ENCODE measurements at regions of chr3 and their contacts with region 1.

Region 1: DNA sequence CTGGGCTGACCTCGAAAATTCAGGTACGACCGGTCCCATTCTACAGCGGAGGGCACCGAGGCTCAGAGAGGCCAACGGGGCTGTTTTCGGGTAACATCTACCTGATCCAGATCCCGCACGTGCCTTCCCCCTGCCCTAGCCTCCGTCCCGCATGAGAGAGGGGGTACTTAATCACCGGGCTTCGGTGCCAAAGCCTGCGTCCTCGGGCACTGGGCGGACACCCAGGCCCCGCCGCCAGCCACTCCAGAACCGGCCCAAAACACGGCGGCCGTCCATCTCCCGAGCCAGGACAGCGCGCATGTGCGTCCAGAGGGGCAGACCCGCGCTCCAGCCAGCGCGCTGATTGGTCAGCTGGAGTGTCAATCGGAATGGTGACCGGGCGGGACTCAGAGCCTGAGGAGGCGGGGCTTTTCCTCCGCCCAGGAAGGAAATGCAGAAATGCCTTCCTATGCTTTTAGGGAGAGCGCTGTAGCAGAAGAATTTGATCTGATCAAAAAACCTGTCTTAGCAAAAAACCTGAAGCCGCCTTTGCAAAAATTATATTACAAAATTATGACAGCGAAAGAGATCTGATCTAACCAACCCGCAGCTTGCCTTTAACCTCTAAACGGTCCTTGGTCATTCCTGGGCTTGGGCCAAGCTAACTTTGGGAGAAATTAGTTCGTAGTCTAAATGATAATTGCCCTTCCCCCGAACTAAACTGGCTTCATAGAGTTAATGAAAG is at the start of gene RPUSD3:
- DNase-seq: peak; percentile 98 to 99 (median 99)
- H3K4me3 ChIP-seq: peak within 1 kb of the TSS; percentile 37 to 89 (median 62)
- H3K27ac ChIP-seq: peak within 1 kb of the TSS in 4 of 5 donors; percentile 51 to 84 (median 79)
- H3K4me1 ChIP-seq: peaks cover 7 to 8% of the 10 kb centered on the region in 2 donors
- H3K27me3 ChIP-seq: no peaks in the 10 kb centered on the region
- CTCF ChIP-seq: no peak
- POLR2A ChIP-seq: peak in 1 of 2 donors; percentile 60
- total RNA-seq, gene RPUSD3: 21.5 to 116 (median 50.8) TPM

Region 2: DNA sequence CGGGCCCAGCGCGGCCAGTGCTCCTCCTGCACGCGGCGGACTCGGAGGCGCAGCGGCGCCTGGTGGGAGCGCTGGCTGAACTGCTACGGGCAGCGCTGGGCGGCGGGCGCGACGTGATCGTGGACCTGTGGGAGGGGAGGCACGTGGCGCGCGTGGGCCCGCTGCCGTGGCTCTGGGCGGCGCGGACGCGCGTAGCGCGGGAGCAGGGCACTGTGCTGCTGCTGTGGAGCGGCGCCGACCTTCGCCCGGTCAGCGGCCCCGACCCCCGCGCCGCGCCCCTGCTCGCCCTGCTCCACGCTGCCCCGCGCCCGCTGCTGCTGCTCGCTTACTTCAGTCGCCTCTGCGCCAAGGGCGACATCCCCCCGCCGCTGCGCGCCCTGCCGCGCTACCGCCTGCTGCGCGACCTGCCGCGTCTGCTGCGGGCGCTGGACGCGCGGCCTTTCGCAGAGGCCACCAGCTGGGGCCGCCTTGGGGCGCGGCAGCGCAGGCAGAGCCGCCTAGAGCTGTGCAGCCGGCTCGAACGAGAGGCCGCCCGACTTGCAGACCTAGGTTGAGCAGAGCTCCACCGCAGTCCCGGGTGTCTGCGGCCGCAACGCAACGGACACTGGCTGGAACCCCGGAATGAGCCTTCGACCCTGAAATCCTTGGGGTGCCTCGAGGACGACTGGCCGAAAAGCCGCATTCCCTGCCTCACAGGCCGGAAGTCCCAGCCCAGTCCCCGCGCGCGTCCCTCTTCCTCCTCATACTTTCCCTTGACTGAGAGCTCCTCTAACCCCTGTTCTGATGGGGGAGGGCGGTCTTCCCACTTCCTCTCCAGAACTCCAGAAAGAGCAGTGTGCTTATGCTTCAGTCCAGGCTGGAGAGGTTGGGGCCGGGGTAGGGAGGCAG is 71.6 kb after region 1 on chr3:
- intact Hi-C with region 1: loop called in 1 of 2 experiments (anchors 5 kb)
- DNase-seq: peak; percentile 72 to 87 (median 75)
- H3K4me3 ChIP-seq: peak overlapping the region in 2 of 4 donors; percentile 20 to 69
- H3K27ac ChIP-seq: peak overlapping the region; percentile 64 to 95 (median 84)
- H3K4me1 ChIP-seq: peaks cover 31 to 62% of the 10 kb centered on the region in 2 donors
- H3K27me3 ChIP-seq: no peaks in the 10 kb centered on the region
- CTCF ChIP-seq: peak in 4 of 6 experiments; percentile 19 to 58 (median 42)
- POLR2A ChIP-seq: peak; percentile 47 to 60

Region 3: DNA sequence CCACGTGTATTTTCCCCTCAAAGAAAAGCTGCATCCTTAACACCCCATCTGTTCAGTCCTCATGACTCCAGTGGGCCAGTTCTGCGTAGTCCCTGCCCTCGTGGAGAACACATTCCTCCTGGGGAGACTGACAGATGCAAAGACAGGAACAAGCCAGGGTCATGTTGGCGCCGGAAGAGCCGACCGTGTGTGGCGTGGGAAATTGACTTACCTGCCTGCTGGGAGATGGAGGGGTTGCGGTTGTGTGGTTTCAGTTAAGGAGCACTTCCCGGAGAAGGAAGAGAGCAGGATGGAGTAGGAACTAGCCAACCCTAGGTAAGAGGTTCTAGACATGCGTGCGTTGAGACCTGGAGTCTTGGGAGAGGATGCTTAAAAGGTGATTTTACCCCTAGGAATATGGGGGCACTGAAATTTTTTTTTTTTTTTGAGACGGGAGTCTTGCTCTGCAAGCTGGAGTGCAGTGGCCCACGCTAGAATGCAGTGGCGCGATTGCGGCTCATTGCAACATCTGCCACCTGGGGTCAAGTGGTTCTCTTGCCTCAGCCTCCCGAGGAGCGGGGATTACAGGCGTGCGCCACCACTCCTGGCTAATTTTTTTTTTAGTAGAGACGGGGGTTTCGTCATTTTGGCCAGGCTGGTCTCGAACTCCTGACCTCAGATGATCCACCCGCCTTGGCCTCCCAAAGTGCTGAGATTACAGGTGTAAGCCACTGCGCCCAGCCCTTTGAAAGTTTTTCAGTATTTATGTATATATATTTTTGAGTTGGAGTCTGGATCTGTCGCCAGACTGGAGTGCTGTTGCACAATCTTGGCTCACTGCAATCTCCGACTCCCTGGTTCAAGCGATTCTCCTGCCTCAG is 299.1 kb after region 1 on chr3:
- intact Hi-C with region 1: loop called in 1 of 2 experiments (anchors 10 kb)
- DNase-seq: peak in 5 of 7 donors; percentile 11 to 53 (median 27)
- H3K4me3 ChIP-seq: peak overlapping the region in 2 of 4 donors; percentile 39 to 79
- H3K27ac ChIP-seq: peak overlapping the region in 3 of 5 donors; percentile 72 to 96 (median 94)
- H3K4me1 ChIP-seq: peaks cover 18 to 28% of the 10 kb centered on the region in 2 donors
- H3K27me3 ChIP-seq: no peaks in the 10 kb centered on the region
- CTCF ChIP-seq: no peak
- POLR2A ChIP-seq: no peak